Calu3 (cell line): ENCODE measurements at regions of chr12 and their contacts with region 1.

Region 1: GRCh38 chr12:26701604-26702215 is 131.3 kb downstream of the ITPR2 start:
- DNase-seq: no peak
- H3K4me3 Mint-ChIP-seq: no peak overlapping the region
- H3K27ac Mint-ChIP-seq: no peak overlapping the region
- H3K4me1 Mint-ChIP-seq: peaks cover 4% of the 10 kb centered on the region
- H3K27me3 Mint-ChIP-seq: no peaks in the 10 kb centered on the region
- CTCF ChIP-seq: no peak

Region 2: DNA sequence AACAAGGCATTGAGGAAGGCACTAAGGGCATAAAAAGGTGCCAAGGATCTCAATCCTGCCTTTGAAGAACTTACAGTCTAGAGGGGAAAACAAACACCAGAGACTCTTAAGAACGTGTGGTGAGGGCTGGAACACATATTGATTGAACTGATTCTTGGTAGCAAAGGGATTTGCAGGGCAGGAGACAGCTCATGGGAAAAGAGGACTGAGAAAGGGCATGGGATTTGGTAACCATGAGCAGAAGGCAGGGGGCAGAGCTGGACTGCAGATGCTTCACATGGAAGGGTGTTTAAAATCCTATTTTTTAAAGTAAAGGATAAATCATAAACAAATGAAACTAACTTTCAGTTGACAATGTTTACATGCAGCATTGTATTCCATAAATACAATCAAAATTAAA is 71.8 kb before region 1 on chr12:
- CTCF ChIA-PET with region 1: interaction called, 6 read pairs
- intact Hi-C with region 1: loop called (anchors 1 kb)
- DNase-seq: no peak
- H3K4me3 Mint-ChIP-seq: no peak overlapping the region
- H3K27ac Mint-ChIP-seq: no peak overlapping the region
- H3K4me1 Mint-ChIP-seq: peaks cover 12% of the 10 kb centered on the region
- H3K27me3 Mint-ChIP-seq: no peaks in the 10 kb centered on the region
- CTCF ChIP-seq: peak; percentile 16

Region 3: DNA sequence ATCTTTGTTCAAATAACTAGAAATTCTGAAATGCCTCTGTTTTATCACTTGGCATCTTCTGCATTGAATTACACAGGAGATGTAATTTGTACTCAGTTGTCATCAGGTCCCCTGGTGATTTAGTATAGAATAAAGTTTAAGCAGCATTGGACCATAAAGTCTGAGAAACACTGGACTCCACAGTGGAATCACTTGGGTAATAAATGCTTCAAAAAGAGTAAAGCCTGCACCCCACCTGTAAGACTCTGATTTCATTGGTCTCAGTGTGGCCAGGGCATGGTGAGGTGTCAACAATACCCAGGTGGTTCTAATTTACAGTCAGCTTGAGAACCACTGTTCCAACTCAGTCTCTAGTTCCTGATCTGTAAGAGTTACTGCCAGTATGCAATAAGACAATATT is 17.6 kb before region 1 on chr12:
- CTCF ChIA-PET with region 1: no interaction called
- intact Hi-C with region 1: no loop called
- DNase-seq: no peak
- H3K4me3 Mint-ChIP-seq: no peak overlapping the region
- H3K27ac Mint-ChIP-seq: no peak overlapping the region
- H3K4me1 Mint-ChIP-seq: no peaks in the 10 kb centered on the region
- H3K27me3 Mint-ChIP-seq: no peaks in the 10 kb centered on the region
- CTCF ChIP-seq: no peak

Region 4: GRCh38 chr12:26845057-26845666 is 143.5 kb after region 1 on chr12:
- CTCF ChIA-PET with region 1: interaction called, 3 read pairs
- intact Hi-C with region 1: loop called (anchors 5 kb)
- DNase-seq: peak; percentile 66
- H3K4me3 Mint-ChIP-seq: no peak overlapping the region
- H3K27ac Mint-ChIP-seq: no peak overlapping the region
- H3K4me1 Mint-ChIP-seq: peaks cover 8% of the 10 kb centered on the region
- H3K27me3 Mint-ChIP-seq: peaks cover 10% of the 10 kb centered on the region
- CTCF ChIP-seq: peak; percentile 50

Region 5: DNA sequence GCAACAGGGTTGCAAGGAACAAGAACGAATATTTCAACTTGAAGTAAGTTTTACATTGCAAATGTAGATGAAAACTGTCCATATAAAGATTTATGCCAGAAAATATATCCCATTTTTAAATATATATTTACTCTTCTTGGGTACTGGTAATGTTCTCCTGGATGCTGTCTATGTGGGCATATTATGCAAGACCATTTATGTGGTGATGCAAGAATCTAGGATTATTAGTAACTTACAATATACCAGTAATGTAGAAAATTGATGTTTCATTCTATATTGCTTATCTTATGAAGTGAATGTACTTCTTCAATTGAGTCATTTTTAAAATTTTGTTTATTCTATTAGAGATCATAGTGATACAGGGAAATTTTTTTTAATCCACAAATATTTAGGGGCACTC is 261.7 kb after region 1 on chr12:
- CTCF ChIA-PET with region 1: no interaction called
- intact Hi-C with region 1: no loop called
- DNase-seq: no peak
- H3K4me3 Mint-ChIP-seq: no peak overlapping the region
- H3K27ac Mint-ChIP-seq: no peak overlapping the region
- H3K4me1 Mint-ChIP-seq: no peaks in the 10 kb centered on the region
- H3K27me3 Mint-ChIP-seq: no peaks in the 10 kb centered on the region
- CTCF ChIP-seq: no peak